AG04450 (cell line): ENCODE measurements at regions of chr2 and their contacts with region 1.

Region 1: DNA sequence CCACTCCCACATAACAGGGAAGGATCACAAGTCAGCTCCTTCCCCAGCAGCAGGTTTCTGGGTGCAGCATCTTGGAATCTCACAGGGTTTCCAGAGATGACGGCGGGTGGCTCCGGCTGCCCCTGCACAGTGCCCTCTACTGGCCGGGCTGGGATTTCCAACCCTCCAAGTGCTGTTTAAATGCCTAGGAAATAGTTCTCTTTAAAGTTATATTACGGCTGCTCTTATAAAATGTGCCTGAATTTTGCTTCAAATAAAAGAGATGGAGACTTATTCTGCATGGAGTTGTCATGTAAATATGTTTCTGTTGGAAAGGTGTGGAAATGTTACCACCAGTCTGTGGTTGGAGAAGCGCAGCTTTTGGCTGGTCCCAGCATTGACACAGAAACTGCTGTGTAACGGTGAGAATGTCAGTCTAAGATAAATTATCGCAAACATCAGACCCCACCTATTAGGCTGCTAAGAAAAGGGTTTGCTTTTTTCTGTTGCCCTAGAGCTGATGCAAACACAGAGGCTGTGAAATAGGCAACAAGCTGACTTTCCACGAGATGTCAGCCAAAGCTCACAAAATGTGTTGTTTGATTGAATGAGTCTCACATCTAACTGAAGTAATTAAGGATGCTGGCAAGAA is 3.3 kb upstream of the HJURP start:
- DNase-seq: no peak
- H3K4me3 ChIP-seq: no peak overlapping the region
- H3K27ac ChIP-seq: no peak overlapping the region
- H3K27me3 ChIP-seq: no peaks in the 10 kb centered on the region
- CTCF ChIP-seq: peak; percentile 53

Region 2: GRCh38 chr2:233844064-233844807 is 13.4 kb before region 1 on chr2:
- CTCF ChIA-PET with region 1: interaction called, 11 read pairs
- POLR2A ChIA-PET with region 1: interaction called, 4 read pairs
- DNase-seq: no peak
- H3K4me3 ChIP-seq: no peak overlapping the region
- H3K27ac ChIP-seq: no peak overlapping the region
- H3K27me3 ChIP-seq: no peaks in the 10 kb centered on the region
- CTCF ChIP-seq: no peak

Region 3: DNA sequence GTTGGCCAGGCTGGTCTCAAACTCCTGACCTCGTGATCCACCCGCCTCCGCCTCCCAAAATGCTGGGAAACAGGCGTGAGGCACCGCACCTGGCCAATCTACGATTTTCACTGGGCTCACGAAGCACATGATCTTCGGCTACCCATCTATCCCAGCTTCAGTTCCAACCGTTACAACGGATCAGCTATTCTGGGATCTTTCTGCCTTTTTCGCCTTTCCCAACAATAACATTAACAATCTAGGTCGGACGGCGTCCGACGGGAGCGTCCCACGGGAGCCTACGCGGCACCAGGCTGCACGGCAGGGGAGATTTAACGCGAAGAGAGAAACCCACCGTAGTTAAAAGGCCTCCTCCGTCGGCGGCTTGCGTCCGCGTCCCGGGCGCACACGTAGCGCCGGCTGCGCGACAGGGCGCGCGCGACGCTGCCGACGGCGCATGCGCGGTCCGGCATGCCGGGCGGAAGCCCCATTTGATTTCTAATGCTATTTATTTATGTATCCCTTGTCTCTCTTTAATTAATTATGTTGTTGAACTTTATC is 10.4 kb after region 1 on chr2 and contains the start of gene MSL3B:
- CTCF ChIA-PET with region 1: interaction called, 13 read pairs
- POLR2A ChIA-PET with region 1: no interaction called
- DNase-seq: no peak
- H3K4me3 ChIP-seq: peak within 1 kb of the TSS; percentile 72
- H3K27ac ChIP-seq: no peak within 1 kb of the TSS
- H3K27me3 ChIP-seq: peaks cover under 1% of the 10 kb centered on the region
- CTCF ChIP-seq: no peak

Region 4: GRCh38 chr2:233928594-233929351 is 71.1 kb after region 1 on chr2:
- CTCF ChIA-PET with region 1: interaction called, 15 read pairs
- POLR2A ChIA-PET with region 1: no interaction called
- DNase-seq: no peak
- H3K4me3 ChIP-seq: no peak overlapping the region
- H3K27ac ChIP-seq: no peak overlapping the region
- H3K27me3 ChIP-seq: peaks cover 9% of the 10 kb centered on the region
- CTCF ChIP-seq: peak; percentile 65